Activated naive CD4-positive, alpha-beta T cell treated with anti-CD3 and anti-CD28 coated beads for 36 hours (primary cell): ENCODE measurements at regions of chr5 and their contacts with region 1.

Region 1: GRCh38 chr5:40557501-40557900 is 122.2 kb upstream of the PTGER4 start:
- DNase-seq: no peak
- H3K4me3 Mint-ChIP-seq: no peak overlapping the region
- H3K27ac Mint-ChIP-seq: no peak overlapping the region
- H3K4me1 Mint-ChIP-seq: peaks cover 37% of the 10 kb centered on the region
- H3K27me3 Mint-ChIP-seq: no peaks in the 10 kb centered on the region

Region 2: GRCh38 chr5:40518511-40518967 is 39.0 kb before region 1 on chr5:
- CTCF ChIA-PET with region 1: no interaction called
- intact Hi-C with region 1: loop called (anchors 5 kb)
- DNase-seq: peak; percentile 19
- H3K4me3 Mint-ChIP-seq: no peak overlapping the region
- H3K27ac Mint-ChIP-seq: no peak overlapping the region
- H3K4me1 Mint-ChIP-seq: peaks cover 34% of the 10 kb centered on the region
- H3K27me3 Mint-ChIP-seq: no peaks in the 10 kb centered on the region